ENCODE measurements at regions of chr5 and their contacts with region 1.

Region 1: GRCh38 chr5:151825445-151825844 is 53.7 kb downstream of the G3BP1 start:
- DNase-seq: peak; percentile 70
- H3K4me3 Mint-ChIP-seq: no peak overlapping the region
- H3K27ac Mint-ChIP-seq: peak overlapping the region; percentile 19
- H3K4me1 Mint-ChIP-seq: peaks cover 11% of the 10 kb centered on the region
- H3K27me3 Mint-ChIP-seq: no peaks in the 10 kb centered on the region
- CTCF ChIP-seq: peak; percentile 90

Region 2: GRCh38 chr5:152142840-152143469 is 317.5 kb after region 1 on chr5:
- CTCF ChIA-PET with region 1: interaction called, 36 read pairs
- intact Hi-C with region 1: loop called (anchors 1 kb)
- DNase-seq: peak; percentile 76
- H3K4me3 Mint-ChIP-seq: no peak overlapping the region
- H3K27ac Mint-ChIP-seq: no peak overlapping the region
- H3K4me1 Mint-ChIP-seq: no peaks in the 10 kb centered on the region
- H3K27me3 Mint-ChIP-seq: peaks cover 24% of the 10 kb centered on the region
- CTCF ChIP-seq: peak; percentile 87

Region 3: GRCh38 chr5:152237531-152237930 is 412.1 kb after region 1 on chr5:
- CTCF ChIA-PET with region 1: no interaction called
- intact Hi-C with region 1: no loop called
- DNase-seq: no peak
- H3K4me3 Mint-ChIP-seq: no peak overlapping the region
- H3K27ac Mint-ChIP-seq: no peak overlapping the region
- H3K4me1 Mint-ChIP-seq: no peaks in the 10 kb centered on the region
- H3K27me3 Mint-ChIP-seq: peaks cover 3% of the 10 kb centered on the region
- CTCF ChIP-seq: no peak

Region 4: DNA sequence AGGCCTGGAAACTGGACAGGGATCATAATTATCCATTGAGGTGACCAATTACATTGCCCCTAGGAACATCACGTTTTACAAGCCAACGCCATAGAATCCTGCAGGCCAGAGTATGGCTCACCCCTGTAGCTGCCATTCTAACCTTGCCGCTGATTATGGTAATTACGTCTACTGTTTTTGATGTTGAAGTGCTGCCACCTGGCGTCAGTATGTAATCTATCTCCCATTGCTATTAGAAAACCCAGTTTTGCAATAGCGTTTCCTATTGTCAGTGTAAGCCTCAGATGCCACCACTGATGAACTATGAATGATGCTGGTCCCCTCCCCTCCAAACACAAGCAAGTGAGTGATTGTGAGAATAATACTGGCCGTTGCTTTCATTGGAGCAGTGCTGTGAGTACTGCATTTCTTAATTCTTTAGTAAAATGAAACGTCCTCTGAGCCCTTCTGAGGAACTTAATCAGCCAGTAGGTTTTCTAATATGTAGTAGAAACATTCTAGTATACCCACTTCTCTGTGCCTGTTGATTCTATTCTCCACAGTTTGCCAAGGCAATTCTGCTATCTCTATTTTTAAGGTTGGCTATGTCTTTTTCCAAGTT is 680.1 kb after region 1 on chr5:
- CTCF ChIA-PET with region 1: interaction called, 9 read pairs
- intact Hi-C with region 1: loop called (anchors 1 kb)
- DNase-seq: peak; percentile 73
- H3K4me3 Mint-ChIP-seq: no peak overlapping the region
- H3K27ac Mint-ChIP-seq: no peak overlapping the region
- H3K4me1 Mint-ChIP-seq: peaks cover 48% of the 10 kb centered on the region
- H3K27me3 Mint-ChIP-seq: no peaks in the 10 kb centered on the region
- CTCF ChIP-seq: peak; percentile 79